CD4-positive, alpha-beta T cell (primary cell): ENCODE measurements at regions of chr6 and their contacts with region 1.

Region 1: DNA sequence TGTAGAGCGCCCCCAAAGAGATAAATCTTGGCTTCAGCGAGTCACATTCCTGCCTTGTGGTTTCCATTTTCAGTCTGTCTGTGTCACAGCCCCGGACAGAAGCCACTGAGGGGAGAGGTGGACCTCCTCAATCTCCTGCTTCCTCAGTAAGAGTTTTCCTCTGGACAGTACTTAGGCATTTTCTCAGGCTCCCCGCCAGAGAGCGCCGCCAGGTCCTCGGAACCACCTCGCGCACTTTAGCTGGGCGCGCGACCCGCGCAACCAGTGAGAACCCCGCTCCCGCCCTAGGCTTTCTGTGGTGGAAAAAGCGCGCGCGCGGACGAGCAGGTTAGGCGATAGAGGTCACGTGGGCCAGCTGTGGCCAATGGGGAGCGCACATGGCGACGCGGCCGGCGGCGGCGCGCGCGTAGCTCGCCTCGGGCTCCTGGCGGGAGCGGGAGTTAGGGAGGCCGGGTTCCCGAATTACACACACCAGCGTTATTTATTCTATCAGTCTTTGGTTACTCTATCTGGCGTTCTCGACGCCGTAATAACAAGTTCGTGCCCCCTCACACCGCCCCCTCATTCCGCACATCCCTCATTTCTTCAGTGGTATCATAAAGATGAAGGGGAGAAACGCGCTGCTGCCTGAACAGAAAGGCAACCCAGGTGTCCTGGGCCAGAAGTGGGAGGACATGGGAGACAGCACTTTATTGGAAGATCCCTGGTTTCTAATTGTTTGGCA is 19.4 kb downstream of the PXT1 start:
- DNase-seq: peak; percentile 96 to 99 (median 98)
- ATAC-seq: peak; percentile 95
- H3K4me3 ChIP-seq: peak overlapping the region; percentile 83
- H3K4me3 Mint-ChIP-seq: peak overlapping the region; percentile 92
- H3K27ac ChIP-seq: peak overlapping the region; percentile 57 to 68
- H3K27ac Mint-ChIP-seq: peak overlapping the region; percentile 82
- H3K4me1 ChIP-seq: peaks cover 11% of the 10 kb centered on the region
- H3K4me1 Mint-ChIP-seq: peaks cover 18% of the 10 kb centered on the region
- H3K27me3 ChIP-seq: no peaks in the 10 kb centered on the region
- H3K27me3 Mint-ChIP-seq: no peaks in the 10 kb centered on the region
- CTCF ChIP-seq: peak; percentile 70

Region 2: GRCh38 chr6:36463676-36464075 is 40.4 kb after region 1 on chr6:
- CTCF ChIA-PET with region 1: interaction called, 9 read pairs
- POLR2A ChIA-PET with region 1: no interaction called
- intact Hi-C with region 1: loop called in 1 of 2 experiments (anchors 5 kb)
- DNase-seq: no peak
- ATAC-seq: no peak
- H3K4me3 ChIP-seq: no peak overlapping the region
- H3K4me3 Mint-ChIP-seq: no peak overlapping the region
- H3K27ac ChIP-seq: no peak overlapping the region
- H3K27ac Mint-ChIP-seq: no peak overlapping the region
- H3K4me1 ChIP-seq: peaks cover 5% of the 10 kb centered on the region
- H3K4me1 Mint-ChIP-seq: peaks cover 46% of the 10 kb centered on the region
- H3K27me3 ChIP-seq: no peaks in the 10 kb centered on the region
- H3K27me3 Mint-ChIP-seq: no peaks in the 10 kb centered on the region
- CTCF ChIP-seq: no peak

Region 3: GRCh38 chr6:36506611-36507010 is 83.3 kb after region 1 on chr6:
- CTCF ChIA-PET with region 1: interaction called, 9 read pairs
- POLR2A ChIA-PET with region 1: no interaction called
- intact Hi-C with region 1: loop called in 1 of 2 experiments (anchors 2 kb)
- DNase-seq: no peak
- ATAC-seq: peak; percentile 74
- H3K4me3 ChIP-seq: no peak overlapping the region
- H3K4me3 Mint-ChIP-seq: peak overlapping the region; percentile 64
- H3K27ac ChIP-seq: peak overlapping the region in 1 of 2 donors; percentile 20
- H3K27ac Mint-ChIP-seq: peak overlapping the region; percentile 86
- H3K4me1 ChIP-seq: peaks cover 21% of the 10 kb centered on the region
- H3K4me1 Mint-ChIP-seq: peaks cover 48% of the 10 kb centered on the region
- H3K27me3 ChIP-seq: no peaks in the 10 kb centered on the region
- H3K27me3 Mint-ChIP-seq: no peaks in the 10 kb centered on the region
- CTCF ChIP-seq: no peak

Region 4: DNA sequence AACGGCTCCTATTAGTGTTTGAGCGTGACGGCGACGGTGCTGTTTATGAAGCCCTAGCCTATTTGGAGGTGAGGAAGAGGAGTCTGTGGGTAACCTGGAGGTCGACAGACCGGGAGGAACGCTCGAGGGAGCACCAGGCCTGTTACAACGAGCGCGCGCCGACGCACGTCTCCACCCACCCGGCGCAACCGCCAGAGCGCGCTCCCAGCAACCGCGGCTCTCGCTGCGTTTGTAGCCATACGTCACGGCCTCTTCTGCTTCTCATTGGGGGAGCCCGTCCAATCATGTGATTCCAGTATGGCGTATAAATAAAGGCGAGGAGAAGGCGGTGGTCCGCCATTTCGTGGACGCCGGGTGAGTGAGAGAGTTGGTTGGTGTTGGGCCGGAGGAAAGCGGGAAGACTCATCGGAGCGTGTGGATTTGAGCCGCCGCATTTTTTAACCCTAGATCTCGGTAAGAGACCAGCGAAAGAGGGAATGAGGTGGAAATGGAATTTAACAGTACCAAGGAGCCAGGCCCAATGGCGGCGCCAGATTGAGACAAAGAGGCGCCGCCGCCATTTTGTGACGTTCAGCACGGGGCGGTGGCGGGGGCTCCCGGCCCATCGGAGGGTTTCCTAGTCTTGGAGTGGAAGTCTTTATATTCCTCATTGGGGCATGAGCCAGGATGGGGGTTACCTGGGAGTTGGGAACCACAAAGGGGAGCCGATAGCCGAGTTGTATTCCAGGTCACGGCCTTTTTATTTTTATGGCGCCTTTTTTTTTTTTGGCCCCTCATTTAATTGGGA is 171.0 kb after region 1 on chr6 and contains the start of gene SRSF3:
- CTCF ChIA-PET with region 1: interaction called, 3 read pairs
- POLR2A ChIA-PET with region 1: interaction called, 13 read pairs
- intact Hi-C with region 1: loop called in 1 of 2 experiments (anchors 2 kb)
- DNase-seq: peak; percentile 89 to 99 (median 94)
- ATAC-seq: peak; percentile 87
- H3K4me3 ChIP-seq: peak within 1 kb of the TSS; percentile 95
- H3K4me3 Mint-ChIP-seq: peak within 1 kb of the TSS; percentile 94
- H3K27ac ChIP-seq: peak within 1 kb of the TSS; percentile 97 to 99
- H3K27ac Mint-ChIP-seq: peak within 1 kb of the TSS; percentile 97
- H3K4me1 ChIP-seq: peaks cover 47% of the 10 kb centered on the region
- H3K4me1 Mint-ChIP-seq: peaks cover 54% of the 10 kb centered on the region
- H3K27me3 ChIP-seq: no peaks in the 10 kb centered on the region
- H3K27me3 Mint-ChIP-seq: peaks cover 5% of the 10 kb centered on the region
- CTCF ChIP-seq: peak; percentile 52
- total RNA-seq, gene SRSF3: 550 to 556 TPM

Region 5: GRCh38 chr6:36759148-36759759 is 336.0 kb after region 1 on chr6:
- CTCF ChIA-PET with region 1: interaction called, 7 read pairs
- POLR2A ChIA-PET with region 1: no interaction called
- intact Hi-C with region 1: loop called (anchors 2 kb)
- DNase-seq: peak; percentile 58 to 88 (median 76)
- ATAC-seq: peak; percentile 53
- H3K4me3 ChIP-seq: no peak overlapping the region
- H3K4me3 Mint-ChIP-seq: no peak overlapping the region
- H3K27ac ChIP-seq: no peak overlapping the region
- H3K27ac Mint-ChIP-seq: no peak overlapping the region
- H3K4me1 ChIP-seq: peaks cover 49% of the 10 kb centered on the region
- H3K4me1 Mint-ChIP-seq: peaks cover 46% of the 10 kb centered on the region
- H3K27me3 ChIP-seq: no peaks in the 10 kb centered on the region
- H3K27me3 Mint-ChIP-seq: no peaks in the 10 kb centered on the region
- CTCF ChIP-seq: peak; percentile 98